Activated B cell treated with CpG ODN at 0.5 μM for 24 hours (primary cell): ENCODE measurements at regions of chr13 and their contacts with region 1.

Region 1: GRCh38 chr13:46126552-46127357 is 21.9 kb upstream of the CPB2 start:
- DNase-seq: peak; percentile 27
- ATAC-seq: peak; percentile 89
- H3K4me3 Mint-ChIP-seq: no peak overlapping the region
- H3K27ac Mint-ChIP-seq: peak overlapping the region; percentile 9
- H3K4me1 Mint-ChIP-seq: peaks cover 30% of the 10 kb centered on the region
- H3K27me3 Mint-ChIP-seq: no peaks in the 10 kb centered on the region
- CTCF ChIP-seq: no peak

Region 2: GRCh38 chr13:45564133-45564776 is 562.5 kb before region 1 on chr13:
- CTCF ChIA-PET with region 1: no interaction called
- POLR2A ChIA-PET with region 1: no interaction called
- intact Hi-C with region 1: no loop called
- DNase-seq: no peak
- ATAC-seq: no peak
- H3K4me3 Mint-ChIP-seq: no peak overlapping the region
- H3K27ac Mint-ChIP-seq: no peak overlapping the region
- H3K4me1 Mint-ChIP-seq: no peaks in the 10 kb centered on the region
- H3K27me3 Mint-ChIP-seq: peaks cover 10% of the 10 kb centered on the region
- CTCF ChIP-seq: no peak

Region 3: GRCh38 chr13:45807520-45808099 is 319.1 kb before region 1 on chr13:
- CTCF ChIA-PET with region 1: no interaction called
- POLR2A ChIA-PET with region 1: no interaction called
- intact Hi-C with region 1: loop called (anchors 5 kb)
- DNase-seq: no peak
- ATAC-seq: no peak
- H3K4me3 Mint-ChIP-seq: no peak overlapping the region
- H3K27ac Mint-ChIP-seq: no peak overlapping the region
- H3K4me1 Mint-ChIP-seq: no peaks in the 10 kb centered on the region
- H3K27me3 Mint-ChIP-seq: no peaks in the 10 kb centered on the region
- CTCF ChIP-seq: no peak

Region 4: DNA sequence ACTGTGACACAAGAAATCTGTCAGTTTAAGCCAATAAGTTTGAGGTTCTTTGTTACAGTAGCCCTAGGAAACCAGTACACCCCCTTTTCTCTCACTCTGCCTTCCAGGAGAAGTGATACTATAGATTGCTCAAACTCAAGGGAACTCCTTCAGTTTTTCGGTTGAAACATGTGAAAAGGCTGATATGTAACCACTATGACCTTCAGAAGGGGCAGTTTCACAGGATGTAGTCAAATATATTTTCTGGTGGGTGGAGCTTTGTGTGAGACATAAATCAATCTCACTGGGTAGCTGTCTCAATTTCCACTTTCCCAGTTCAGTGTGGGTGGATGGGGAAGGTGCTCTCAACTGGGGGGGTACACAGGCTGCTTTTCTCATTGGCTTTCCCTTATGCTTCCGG is 728.4 kb after region 1 on chr13:
- CTCF ChIA-PET with region 1: no interaction called
- POLR2A ChIA-PET with region 1: no interaction called
- intact Hi-C with region 1: no loop called
- DNase-seq: no peak
- ATAC-seq: no peak
- H3K4me3 Mint-ChIP-seq: no peak overlapping the region
- H3K27ac Mint-ChIP-seq: no peak overlapping the region
- H3K4me1 Mint-ChIP-seq: no peaks in the 10 kb centered on the region
- H3K27me3 Mint-ChIP-seq: peaks cover 10% of the 10 kb centered on the region
- CTCF ChIP-seq: no peak